Colonic mucosa (tissue), 4 donors: ENCODE measurements at regions of chr7 and their contacts with region 1.

Region 1: DNA sequence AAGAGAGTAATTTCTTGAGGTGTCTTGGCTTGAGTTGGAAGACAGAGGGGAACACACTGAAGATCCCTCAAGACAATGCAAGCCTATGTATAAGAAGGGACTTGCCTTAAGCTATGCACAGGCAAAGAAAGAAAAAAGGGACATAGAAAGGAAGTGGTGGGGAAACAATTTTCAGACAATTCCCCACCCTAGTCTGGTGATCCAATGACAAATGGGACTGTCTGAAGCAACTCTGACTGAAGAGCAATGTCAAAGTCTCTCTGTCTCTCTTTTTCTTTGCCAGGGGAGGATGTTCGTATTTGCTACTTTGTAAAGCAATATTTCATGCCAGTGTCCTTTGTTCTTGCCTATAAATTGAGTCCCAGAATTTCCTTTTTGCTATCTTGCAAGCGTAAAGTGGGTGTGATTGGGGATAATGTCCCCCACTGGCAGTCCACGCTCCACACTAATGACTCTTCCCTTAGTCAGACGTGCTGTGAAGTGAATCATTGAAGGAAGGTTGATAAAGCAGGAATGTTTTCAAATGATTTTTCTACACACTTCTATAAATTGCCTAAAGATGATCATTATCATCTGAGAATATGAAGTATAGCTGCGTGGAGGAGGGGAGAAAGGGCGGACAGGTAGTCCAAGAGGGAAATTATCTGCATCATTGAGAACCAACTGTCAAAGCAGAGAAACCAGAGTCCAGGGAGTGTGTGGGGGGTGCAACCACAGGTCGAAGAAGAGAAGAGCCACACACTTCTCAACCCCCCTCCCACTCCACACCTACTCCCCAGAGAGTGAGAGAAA is 243.8 kb upstream of the ETV1 start:
- DNase-seq: peak; percentile 25
- H3K4me3 ChIP-seq: no peak overlapping the region
- H3K27ac ChIP-seq: no peak overlapping the region
- H3K4me1 ChIP-seq: no peaks in the 10 kb centered on the region
- H3K27me3 ChIP-seq: no peaks in the 10 kb centered on the region
- CTCF ChIP-seq: no peak

Region 2: GRCh38 chr7:13682626-13683025 is 550.6 kb before region 1 on chr7:
- intact Hi-C with region 1: no loop called
- DNase-seq: no peak
- H3K4me3 ChIP-seq: no peak overlapping the region
- H3K27ac ChIP-seq: no peak overlapping the region
- H3K4me1 ChIP-seq: no peaks in the 10 kb centered on the region
- H3K27me3 ChIP-seq: no peaks in the 10 kb centered on the region
- CTCF ChIP-seq: no peak

Region 3: DNA sequence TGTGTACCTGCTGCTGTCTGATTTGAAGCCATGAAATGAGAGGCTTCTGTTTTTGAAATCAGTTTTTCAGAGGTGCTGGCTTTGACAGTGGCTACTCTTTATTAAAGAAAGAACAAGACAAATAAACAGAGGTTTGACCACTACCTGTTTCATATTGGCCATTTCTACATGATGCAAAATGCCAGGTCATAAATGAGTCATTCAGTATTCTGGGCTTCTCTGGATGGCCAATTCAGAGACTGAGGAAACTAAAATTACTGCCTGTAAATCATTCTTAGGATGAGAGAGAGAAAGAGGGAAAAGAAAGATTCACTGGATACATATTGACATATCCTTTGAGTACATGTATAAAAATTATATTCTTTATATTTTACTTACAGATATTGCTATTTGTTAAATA is 59.5 kb after region 1 on chr7:
- intact Hi-C with region 1: loop called (anchors 10 kb)
- DNase-seq: no peak
- H3K4me3 ChIP-seq: no peak overlapping the region
- H3K27ac ChIP-seq: no peak overlapping the region
- H3K4me1 ChIP-seq: no peaks in the 10 kb centered on the region
- H3K27me3 ChIP-seq: no peaks in the 10 kb centered on the region
- CTCF ChIP-seq: no peak

Region 4: GRCh38 chr7:14424675-14425074 is 191.4 kb after region 1 on chr7:
- intact Hi-C with region 1: no loop called
- DNase-seq: no peak
- H3K4me3 ChIP-seq: no peak overlapping the region
- H3K27ac ChIP-seq: no peak overlapping the region
- H3K4me1 ChIP-seq: no peaks in the 10 kb centered on the region
- H3K27me3 ChIP-seq: no peaks in the 10 kb centered on the region
- CTCF ChIP-seq: no peak